CD14-positive monocyte (primary cell): ENCODE measurements at regions of chr13 and their contacts with region 1.

Region 1: GRCh38 chr13:49627831-49628652 is at the start of gene ARL11:
- DNase-seq: peak; percentile 87 to 91 (median 88)
- H3K4me3 ChIP-seq: peak within 1 kb of the TSS; percentile 68 to 97 (median 96)
- H3K4me3 Mint-ChIP-seq: peak within 1 kb of the TSS; percentile 92 to 97
- H3K27ac ChIP-seq: peak within 1 kb of the TSS; percentile 58 to 93
- H3K27ac Mint-ChIP-seq: peak within 1 kb of the TSS; percentile 92 to 97 (median 94)
- H3K4me1 ChIP-seq: peaks cover 51 to 72% of the 10 kb centered on the region in 2 donors
- H3K4me1 Mint-ChIP-seq: peaks cover 59% of the 10 kb centered on the region
- H3K27me3 ChIP-seq: no peaks in the 10 kb centered on the region
- H3K27me3 Mint-ChIP-seq: peaks cover 0 to 1% (median 1%) of the 10 kb centered on the region in 3 donors
- CTCF ChIP-seq: no peak
- polyA plus RNA-seq, gene ARL11: 12.8 to 19.2 (median 15.2) TPM

Region 2: GRCh38 chr13:48994706-48995105 is 633.3 kb before region 1 on chr13:
- intact Hi-C with region 1: no loop called
- DNase-seq: peak; percentile 33 to 60 (median 37)
- H3K4me3 ChIP-seq: no peak overlapping the region
- H3K4me3 Mint-ChIP-seq: no peak overlapping the region
- H3K27ac ChIP-seq: peak overlapping the region in 1 of 2 donors; percentile 39
- H3K27ac Mint-ChIP-seq: peak overlapping the region in 6 of 7 donors; percentile 56 to 77 (median 68)
- H3K4me1 ChIP-seq: peaks cover 9 to 10% of the 10 kb centered on the region in 2 donors
- H3K4me1 Mint-ChIP-seq: peaks cover 11% of the 10 kb centered on the region
- H3K27me3 ChIP-seq: no peaks in the 10 kb centered on the region
- H3K27me3 Mint-ChIP-seq: peaks cover 0 to 2% (median 0%) of the 10 kb centered on the region in 3 donors
- CTCF ChIP-seq: no peak

Region 3: DNA sequence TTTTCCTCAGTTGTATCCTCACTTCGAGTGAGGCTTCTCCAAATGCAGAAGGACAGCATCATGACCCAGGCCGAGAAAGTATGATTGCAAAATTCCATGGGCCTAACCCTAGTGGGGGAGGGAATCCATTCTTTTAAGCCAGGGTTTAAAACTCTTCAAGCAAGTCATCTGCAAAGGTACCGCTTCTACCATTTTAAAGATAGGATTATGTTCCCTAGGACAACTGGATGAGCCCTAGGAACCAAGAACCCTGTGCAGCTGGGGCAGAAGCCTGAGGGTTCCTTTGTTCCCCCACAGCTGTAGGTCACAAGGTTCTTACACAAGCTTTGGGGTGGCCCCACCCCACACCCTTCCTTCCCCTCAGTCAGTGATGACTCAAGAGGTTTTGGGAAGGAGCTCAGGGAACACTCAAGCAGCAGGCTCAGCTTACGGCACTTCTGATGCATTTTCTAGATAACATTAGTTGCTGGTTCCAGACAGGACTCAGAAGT is 13.8 kb after region 1 on chr13:
- intact Hi-C with region 1: loop called in 1 of 2 experiments (anchors 2 kb)
- DNase-seq: peak; percentile 93 to 97 (median 96)
- H3K4me3 ChIP-seq: peak overlapping the region; percentile 47 to 80 (median 61)
- H3K4me3 Mint-ChIP-seq: peak overlapping the region; percentile 78 to 97
- H3K27ac ChIP-seq: peak overlapping the region; percentile 91 to 93
- H3K27ac Mint-ChIP-seq: peak overlapping the region; percentile 96 to 99 (median 99)
- H3K4me1 ChIP-seq: peaks cover 58 to 78% of the 10 kb centered on the region in 2 donors
- H3K4me1 Mint-ChIP-seq: peaks cover 67% of the 10 kb centered on the region
- H3K27me3 ChIP-seq: no peaks in the 10 kb centered on the region
- H3K27me3 Mint-ChIP-seq: no peaks in the 10 kb centered on the region
- CTCF ChIP-seq: no peak